Posterior vena cava (tissue), 2 donors: ENCODE measurements at regions of chrX and their contacts with region 1.

Region 1: DNA sequence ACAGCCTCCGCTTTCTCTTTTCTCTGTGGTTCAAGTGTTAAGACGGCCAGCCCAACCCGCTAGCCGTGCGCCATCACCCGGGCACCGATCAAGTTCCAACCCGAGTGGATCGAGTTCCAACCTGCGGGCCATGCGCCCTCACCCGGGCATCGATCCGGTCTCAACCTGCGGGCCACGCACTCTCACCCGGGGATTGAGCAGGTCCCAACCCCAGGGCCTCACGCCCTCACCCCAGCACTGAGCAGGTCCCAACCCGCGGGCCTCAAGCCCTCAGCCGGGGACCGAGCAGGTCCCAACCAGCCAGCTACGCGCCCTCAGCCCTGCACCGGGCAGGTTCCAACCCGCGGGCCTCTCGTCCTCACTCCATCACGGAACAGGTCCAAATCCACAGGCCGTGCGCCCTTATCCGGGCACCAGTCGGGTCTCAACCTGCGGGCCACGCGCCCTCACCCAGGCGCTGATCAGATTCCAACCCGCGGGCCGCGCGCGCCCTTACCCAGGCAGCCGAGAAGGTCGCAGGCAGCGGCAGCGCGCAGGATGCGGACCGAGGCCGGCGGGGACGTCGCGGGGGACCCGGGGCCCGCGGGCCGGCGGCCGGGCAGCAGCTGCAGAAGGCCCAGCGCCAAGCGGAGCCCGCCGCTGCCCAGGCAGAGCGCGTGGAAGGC is 443 bp downstream of the GPR143 start:
- DNase-seq: peak; percentile 71

Region 2: GRCh38 chrX:9899640-9900111 is 134.5 kb after region 1 on chrX:
- intact Hi-C with region 1: no loop called
- DNase-seq: no peak

Region 3: GRCh38 chrX:10039821-10040793 is 274.9 kb after region 1 on chrX:
- intact Hi-C with region 1: loop called in 1 of 2 experiments (anchors 5 kb)
- DNase-seq: no peak